CD8-positive, alpha-beta memory T cell (primary cell): ENCODE measurements at regions of chr4 and their contacts with region 1.

Region 1: DNA sequence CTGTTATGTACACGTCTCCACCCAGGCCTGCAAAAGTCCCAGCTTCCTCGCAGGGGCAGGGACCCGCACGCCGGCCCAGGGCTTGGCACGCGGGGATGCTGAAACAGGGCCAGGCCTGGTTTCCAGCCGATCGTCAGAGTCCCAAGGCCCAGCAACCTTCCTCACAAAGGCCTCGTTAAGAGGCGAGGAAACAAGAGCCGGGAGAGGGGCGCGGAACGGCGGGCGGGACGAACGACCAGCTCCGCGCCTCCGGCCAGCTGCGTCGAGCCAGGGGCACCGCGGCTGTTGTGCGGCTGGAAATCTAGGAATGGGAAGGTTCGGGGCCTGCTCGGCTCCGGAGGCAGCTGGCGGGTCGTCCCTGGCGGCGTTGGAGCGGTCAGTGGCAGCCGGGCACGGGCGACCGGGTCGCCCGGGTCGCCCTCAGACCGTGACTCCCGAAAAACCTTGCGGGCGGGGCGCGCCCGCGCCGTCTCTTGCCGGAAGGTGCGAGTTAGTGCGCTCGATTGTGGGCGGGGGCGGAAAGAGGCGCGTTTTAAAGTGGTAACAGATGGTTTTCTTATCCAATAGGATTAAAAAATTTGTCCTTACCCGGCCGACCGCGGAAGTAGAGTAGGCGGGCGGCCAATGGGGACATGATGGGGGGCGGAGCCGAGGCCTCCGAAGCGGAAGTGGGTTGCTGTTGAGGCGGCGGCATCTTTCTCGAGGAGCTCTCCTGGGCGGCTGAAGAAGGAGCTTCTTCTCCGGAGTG is at the start of gene RNF4:
- DNase-seq: peak; percentile 91 to 97 (median 95)
- H3K4me3 ChIP-seq: peak within 1 kb of the TSS; percentile 87
- H3K4me3 Mint-ChIP-seq: peak within 1 kb of the TSS; percentile 92 to 98 (median 97)
- H3K27ac ChIP-seq: peak within 1 kb of the TSS; percentile 97
- H3K27ac Mint-ChIP-seq: peak within 1 kb of the TSS; percentile 98 to 99 (median 98)
- H3K4me1 ChIP-seq: peaks cover 44% of the 10 kb centered on the region
- H3K4me1 Mint-ChIP-seq: peaks cover 44 to 60% (median 50%) of the 10 kb centered on the region in 3 donors
- H3K27me3 ChIP-seq: no peaks in the 10 kb centered on the region
- H3K27me3 Mint-ChIP-seq: no peaks in the 10 kb centered on the region
- total RNA-seq, gene RNF4: 95.4 to 98.1 TPM

Region 2: GRCh38 chr4:2255501-2256155 is 213.0 kb before region 1 on chr4:
- CTCF ChIA-PET with region 1: no interaction called
- POLR2A ChIA-PET with region 1: no interaction called
- DNase-seq: peak in 2 of 5 donors; percentile 1 to 40
- H3K4me3 ChIP-seq: no peak overlapping the region
- H3K4me3 Mint-ChIP-seq: peak overlapping the region in 1 of 7 donors; percentile 27
- H3K27ac ChIP-seq: no peak overlapping the region
- H3K27ac Mint-ChIP-seq: peak overlapping the region in 1 of 8 donors; percentile 14
- H3K4me1 ChIP-seq: peaks cover 13% of the 10 kb centered on the region
- H3K4me1 Mint-ChIP-seq: peaks cover 8 to 37% (median 12%) of the 10 kb centered on the region in 3 donors
- H3K27me3 ChIP-seq: no peaks in the 10 kb centered on the region
- H3K27me3 Mint-ChIP-seq: no peaks in the 10 kb centered on the region

Region 3: GRCh38 chr4:2418650-2419571 is 49.7 kb before region 1 on chr4 and contains the start of gene CFAP99:
- CTCF ChIA-PET with region 1: interaction called, 7 read pairs
- POLR2A ChIA-PET with region 1: interaction called, 10 read pairs
- DNase-seq: peak; percentile 91 to 99 (median 98)
- H3K4me3 ChIP-seq: peak within 1 kb of the TSS; percentile 55
- H3K4me3 Mint-ChIP-seq: peak within 1 kb of the TSS; percentile 89 to 97 (median 90)
- H3K27ac ChIP-seq: peak within 1 kb of the TSS; percentile 85
- H3K27ac Mint-ChIP-seq: peak within 1 kb of the TSS; percentile 87 to 100 (median 97)
- H3K4me1 ChIP-seq: peaks cover 32% of the 10 kb centered on the region
- H3K4me1 Mint-ChIP-seq: peaks cover 37 to 50% (median 45%) of the 10 kb centered on the region in 3 donors
- H3K27me3 ChIP-seq: peaks cover 8% of the 10 kb centered on the region
- H3K27me3 Mint-ChIP-seq: peaks cover 4 to 12% of the 10 kb centered on the region in 2 donors
- total RNA-seq, gene CFAP99: 0.07 TPM in 1 of 2 experiments, not detected in the other

Region 4: DNA sequence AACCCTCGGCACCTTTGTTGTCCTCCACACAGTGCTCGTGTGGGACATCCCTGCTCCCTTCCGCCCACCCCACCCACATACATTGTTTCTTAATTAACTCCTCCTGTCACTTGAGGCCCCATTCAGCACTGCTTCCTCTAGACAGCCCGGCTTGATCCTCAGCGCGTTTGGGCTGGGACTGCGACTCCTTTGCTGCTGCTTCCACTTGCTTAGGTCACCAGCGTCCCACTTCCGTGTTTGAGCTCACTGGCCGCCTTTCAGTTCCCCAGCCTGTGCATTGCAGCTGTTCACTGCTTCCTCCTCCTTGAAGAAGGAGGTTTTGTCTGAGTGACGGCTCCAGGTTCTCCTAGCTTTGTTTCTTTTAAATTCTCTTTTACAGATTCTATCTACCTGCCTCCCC is 16.4 kb after region 1 on chr4:
- CTCF ChIA-PET with region 1: interaction called, 8 read pairs
- POLR2A ChIA-PET with region 1: interaction called, 14 read pairs
- DNase-seq: peak; percentile 43 to 80 (median 63)
- H3K4me3 ChIP-seq: peak overlapping the region; percentile 51
- H3K4me3 Mint-ChIP-seq: peak overlapping the region; percentile 55 to 90 (median 81)
- H3K27ac ChIP-seq: peak overlapping the region; percentile 41
- H3K27ac Mint-ChIP-seq: peak overlapping the region; percentile 74 to 94 (median 90)
- H3K4me1 ChIP-seq: peaks cover 77% of the 10 kb centered on the region
- H3K4me1 Mint-ChIP-seq: peaks cover 78 to 91% (median 87%) of the 10 kb centered on the region in 3 donors
- H3K27me3 ChIP-seq: no peaks in the 10 kb centered on the region
- H3K27me3 Mint-ChIP-seq: no peaks in the 10 kb centered on the region

Region 5: GRCh38 chr4:2536193-2537010 is 67.8 kb after region 1 on chr4 and contains the start of gene FAM193A:
- CTCF ChIA-PET with region 1: interaction called, 3 read pairs
- POLR2A ChIA-PET with region 1: interaction called, 16 read pairs
- DNase-seq: peak; percentile 97 to 100 (median 99)
- H3K4me3 ChIP-seq: peak within 1 kb of the TSS; percentile 80
- H3K4me3 Mint-ChIP-seq: peak within 1 kb of the TSS; percentile 88 to 97 (median 91)
- H3K27ac ChIP-seq: peak within 1 kb of the TSS; percentile 80
- H3K27ac Mint-ChIP-seq: peak within 1 kb of the TSS; percentile 93 to 95 (median 94)
- H3K4me1 ChIP-seq: peaks cover 27% of the 10 kb centered on the region
- H3K4me1 Mint-ChIP-seq: peaks cover 16 to 42% (median 20%) of the 10 kb centered on the region in 3 donors
- H3K27me3 ChIP-seq: no peaks in the 10 kb centered on the region
- H3K27me3 Mint-ChIP-seq: no peaks in the 10 kb centered on the region
- total RNA-seq, gene FAM193A: 25.8 to 26.9 TPM